ENCODE measurements at regions of chr5 and their contacts with region 1.

Region 1: GRCh38 chr5:98796197-98796972 is 22.9 kb downstream of the RGMB start:
- DNase-seq: no peak
- H3K4me3 ChIP-seq: no peak overlapping the region
- H3K27ac ChIP-seq: peak overlapping the region; percentile 21
- H3K27me3 ChIP-seq: no peaks in the 10 kb centered on the region
- CTCF ChIP-seq: peak; percentile 83

Region 2: GRCh38 chr5:96823900-96824351 is 1972.5 kb before region 1 on chr5:
- CTCF ChIA-PET with region 1: interaction called, 12 read pairs
- POLR2A ChIA-PET with region 1: no interaction called
- DNase-seq: no peak
- H3K4me3 ChIP-seq: no peak overlapping the region
- H3K27ac ChIP-seq: no peak overlapping the region
- H3K27me3 ChIP-seq: no peaks in the 10 kb centered on the region
- CTCF ChIP-seq: no peak

Region 3: GRCh38 chr5:98341038-98342032 is 455.1 kb before region 1 on chr5:
- CTCF ChIA-PET with region 1: no interaction called
- POLR2A ChIA-PET with region 1: no interaction called
- DNase-seq: peak; percentile 94
- H3K4me3 ChIP-seq: no peak overlapping the region
- H3K27ac ChIP-seq: peak overlapping the region; percentile 84
- H3K27me3 ChIP-seq: no peaks in the 10 kb centered on the region
- CTCF ChIP-seq: no peak

Region 4: DNA sequence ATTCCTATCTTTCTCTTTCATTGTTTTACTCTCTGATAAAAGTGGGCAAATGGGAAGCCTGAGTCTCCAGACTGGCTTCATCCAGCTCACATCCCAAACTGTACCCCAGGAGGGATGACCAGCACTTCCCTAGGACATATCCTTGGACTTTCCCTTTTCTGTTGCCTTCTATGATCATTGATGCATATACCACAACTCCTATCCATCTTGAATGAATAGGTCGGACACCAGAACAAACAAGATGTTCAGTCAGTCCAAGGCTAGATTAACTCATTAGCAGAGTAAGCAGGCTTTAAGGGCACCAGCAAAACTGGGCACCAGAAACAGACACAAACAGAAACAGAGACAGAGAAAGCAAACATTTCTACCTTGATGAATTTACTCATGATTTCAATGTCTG is 182.0 kb before region 1 on chr5:
- CTCF ChIA-PET with region 1: no interaction called
- POLR2A ChIA-PET with region 1: no interaction called
- DNase-seq: no peak
- H3K4me3 ChIP-seq: no peak overlapping the region
- H3K27ac ChIP-seq: no peak overlapping the region
- H3K27me3 ChIP-seq: no peaks in the 10 kb centered on the region
- CTCF ChIP-seq: no peak

Region 5: GRCh38 chr5:98773464-98774191 is 22.8 kb before region 1 on chr5 and contains the start of gene RGMB:
- CTCF ChIA-PET with region 1: interaction called, 15 read pairs
- POLR2A ChIA-PET with region 1: interaction called, 5 read pairs
- DNase-seq: peak; percentile 99
- H3K4me3 ChIP-seq: peak within 1 kb of the TSS; percentile 92
- H3K27ac ChIP-seq: peak within 1 kb of the TSS; percentile 83
- H3K27me3 ChIP-seq: no peaks in the 10 kb centered on the region
- CTCF ChIP-seq: no peak
- polyA plus RNA-seq, gene RGMB: 53.6 and 57.7 TPM in 2 replicates

Region 6: GRCh38 chr5:98786191-98786853 is 10.1 kb before region 1 on chr5:
- CTCF ChIA-PET with region 1: interaction called, 28 read pairs
- POLR2A ChIA-PET with region 1: interaction called, 5 read pairs
- DNase-seq: no peak
- H3K4me3 ChIP-seq: no peak overlapping the region
- H3K27ac ChIP-seq: no peak overlapping the region
- H3K27me3 ChIP-seq: no peaks in the 10 kb centered on the region
- CTCF ChIP-seq: no peak

Measured in AG04450 (cell line).